Motor neuron (in vitro differentiated cells): ENCODE measurements at regions of chr2 and their contacts with region 1.

Region 1: GRCh38 chr2:209423562-209424198 is at the start of gene MAP2:
- ATAC-seq: peak; percentile 95 to 99 (median 97)
- H3K4me3 ChIP-seq: peak within 1 kb of the TSS; percentile 51 to 62 (median 56)
- H3K27ac ChIP-seq: peak within 1 kb of the TSS; percentile 1 to 59
- H3K4me1 ChIP-seq: peaks cover 0 to 3% of the 10 kb centered on the region in 2 donors
- total RNA-seq, gene MAP2: 0.66 to 429 (median 346) TPM

Region 2: DNA sequence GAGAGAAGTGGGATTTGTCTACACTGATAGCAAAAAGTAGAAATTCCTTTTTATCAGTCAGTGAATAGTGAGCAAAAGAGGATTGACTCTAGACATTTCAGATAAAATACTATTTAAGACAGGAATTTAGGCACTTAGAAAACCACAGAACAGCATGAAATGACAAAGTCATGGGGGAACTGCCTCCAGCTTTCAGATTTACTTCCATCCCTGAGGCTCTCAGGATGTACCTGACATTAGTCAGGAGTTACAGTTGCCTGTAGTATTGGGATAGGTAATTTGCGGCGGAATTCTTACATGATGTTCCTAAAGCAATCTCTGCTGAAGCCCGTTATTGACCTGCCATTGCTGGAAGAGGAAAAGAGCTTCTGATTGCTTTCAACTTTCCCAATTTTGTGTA is 336.9 kb before region 1 on chr2:
- in situ Hi-C with region 1: no loop called
- ATAC-seq: no peak
- H3K4me3 ChIP-seq: no peak overlapping the region
- H3K27ac ChIP-seq: no peak overlapping the region
- H3K4me1 ChIP-seq: no peaks in the 10 kb centered on the region

Region 3: GRCh38 chr2:209146682-209147320 is 276.9 kb before region 1 on chr2:
- in situ Hi-C with region 1: no loop called
- ATAC-seq: no peak
- H3K4me3 ChIP-seq: no peak overlapping the region
- H3K27ac ChIP-seq: no peak overlapping the region
- H3K4me1 ChIP-seq: no peaks in the 10 kb centered on the region

Region 4: DNA sequence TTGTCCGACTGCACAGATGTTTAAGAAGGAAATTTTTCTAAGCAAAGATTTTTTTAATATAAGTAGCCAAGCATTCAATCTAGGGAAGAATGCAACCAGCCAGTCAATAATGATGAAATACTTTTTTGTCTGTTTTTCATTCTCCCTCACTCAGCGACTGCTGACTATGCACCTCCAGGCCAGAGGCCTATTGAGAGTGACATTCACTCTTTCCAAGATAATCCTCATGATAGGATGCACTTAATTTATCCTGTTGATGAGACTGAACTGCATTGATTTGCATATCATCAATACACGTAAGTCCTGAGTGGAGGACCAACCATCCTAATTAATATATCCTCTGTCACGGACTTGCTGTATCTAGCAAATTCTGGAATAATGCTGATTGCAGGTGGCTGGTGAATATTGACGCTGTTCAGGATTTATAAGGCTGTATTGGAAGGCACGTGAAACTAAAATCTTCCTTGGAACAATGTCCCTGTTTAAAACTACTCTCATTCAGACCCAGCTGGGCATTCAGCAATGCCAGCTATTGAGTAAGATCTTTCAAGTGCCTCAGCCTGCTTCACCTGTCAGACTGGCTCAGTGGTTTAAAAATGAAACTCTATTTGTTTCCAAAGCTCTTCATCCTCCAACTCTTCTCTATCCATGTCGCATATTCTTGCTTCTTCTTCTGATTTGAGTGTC is 142.4 kb after region 1 on chr2:
- in situ Hi-C with region 1: loop called in 1 of 9 experiments (anchors 10 kb)
- ATAC-seq: peak in 5 of 8 experiments; percentile 56 to 70 (median 67)
- H3K4me3 ChIP-seq: no peak overlapping the region
- H3K27ac ChIP-seq: no peak overlapping the region
- H3K4me1 ChIP-seq: peaks cover 12 to 17% of the 10 kb centered on the region in 2 donors

Region 5: DNA sequence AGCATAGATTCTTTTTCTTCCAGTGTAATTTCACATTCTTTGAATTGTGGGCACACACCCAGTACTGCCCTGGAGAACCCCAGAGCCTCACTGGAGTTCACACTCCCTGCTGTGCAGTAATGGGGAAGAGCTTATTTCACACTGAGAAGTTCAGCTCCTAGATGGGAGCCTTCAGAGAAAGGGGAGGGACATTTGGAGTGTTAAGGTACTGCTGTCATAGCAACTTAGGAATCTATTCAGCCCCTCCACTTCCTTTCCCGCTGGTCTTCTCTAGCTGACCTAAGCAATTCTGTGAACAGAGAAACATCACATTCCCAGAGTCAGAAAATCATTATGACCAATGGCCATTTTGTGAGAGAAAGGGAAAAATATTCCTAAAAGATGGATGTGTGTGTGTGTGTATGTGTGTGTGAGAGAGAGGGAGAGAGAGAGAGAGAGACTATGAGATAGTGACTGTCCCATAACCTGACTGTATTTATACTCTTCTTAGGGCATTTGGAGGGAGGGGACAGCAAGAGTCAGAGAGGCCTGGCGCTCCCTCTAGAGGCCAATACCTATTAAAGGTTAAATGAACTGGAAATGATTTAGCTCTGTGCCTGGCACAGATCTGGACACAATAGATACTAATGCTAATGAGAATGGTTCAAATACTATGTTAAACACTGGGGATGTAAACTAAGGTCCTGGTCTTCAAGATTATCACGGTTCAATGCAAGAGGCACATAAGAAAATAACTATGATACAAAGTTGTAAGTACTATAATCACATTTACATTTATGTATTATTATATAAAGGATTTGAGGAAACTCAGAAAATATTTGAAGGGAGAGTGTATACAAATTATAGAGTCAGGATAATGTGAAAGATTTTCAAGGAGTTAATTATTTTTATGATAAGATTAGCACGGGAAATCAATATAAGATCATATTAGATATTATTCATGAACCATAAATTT is 537.3 kb after region 1 on chr2:
- in situ Hi-C with region 1: loop called in 1 of 9 experiments (anchors 25 kb)
- ATAC-seq: peak; percentile 88 to 97 (median 93)
- H3K4me3 ChIP-seq: no peak overlapping the region
- H3K27ac ChIP-seq: peak overlapping the region; percentile 21 to 53
- H3K4me1 ChIP-seq: peaks cover 22 to 36% of the 10 kb centered on the region in 2 donors